ENCODE measurements at regions of chr6 and their contacts with region 1.

Region 1: GRCh38 chr6:125314019-125314581 is 12.3 kb upstream of the HDDC2 start:
- DNase-seq: peak; percentile 54
- H3K4me3 Mint-ChIP-seq: no peak overlapping the region
- H3K27ac Mint-ChIP-seq: no peak overlapping the region
- H3K4me1 Mint-ChIP-seq: no peaks in the 10 kb centered on the region
- H3K27me3 Mint-ChIP-seq: no peaks in the 10 kb centered on the region

Region 2: DNA sequence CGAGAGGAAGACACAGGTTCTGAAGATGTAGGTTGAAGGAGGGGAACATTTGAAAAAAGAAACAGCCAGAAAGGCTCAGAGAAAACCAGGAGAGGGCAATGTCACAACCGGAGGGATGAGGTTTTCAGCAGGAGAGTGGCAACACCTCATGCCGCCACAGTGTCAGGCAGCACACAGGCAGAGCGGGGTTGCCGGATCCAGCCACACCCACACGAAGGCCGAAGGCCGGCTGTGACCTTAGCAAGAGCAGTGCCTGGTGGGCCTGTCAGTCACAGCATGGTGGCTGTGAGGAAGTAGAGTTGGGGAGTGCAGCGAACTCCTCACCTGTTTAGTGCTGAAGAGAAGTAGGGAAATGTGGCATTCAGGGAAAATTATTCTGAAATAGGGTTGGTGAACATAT is 26.4 kb before region 1 on chr6:
- CTCF ChIA-PET with region 1: no interaction called
- DNase-seq: no peak
- H3K4me3 Mint-ChIP-seq: no peak overlapping the region
- H3K27ac Mint-ChIP-seq: no peak overlapping the region
- H3K4me1 Mint-ChIP-seq: peaks cover 2% of the 10 kb centered on the region
- H3K27me3 Mint-ChIP-seq: no peaks in the 10 kb centered on the region

Region 3: GRCh38 chr6:125421853-125422252 is 107.8 kb after region 1 on chr6:
- CTCF ChIA-PET with region 1: no interaction called
- DNase-seq: no peak
- H3K4me3 Mint-ChIP-seq: no peak overlapping the region
- H3K27ac Mint-ChIP-seq: no peak overlapping the region
- H3K4me1 Mint-ChIP-seq: no peaks in the 10 kb centered on the region
- H3K27me3 Mint-ChIP-seq: no peaks in the 10 kb centered on the region

Region 4: GRCh38 chr6:125753218-125753936 is 439.3 kb after region 1 on chr6:
- CTCF ChIA-PET with region 1: interaction called, 82 read pairs
- DNase-seq: no peak
- H3K4me3 Mint-ChIP-seq: no peak overlapping the region
- H3K27ac Mint-ChIP-seq: no peak overlapping the region
- H3K4me1 Mint-ChIP-seq: peaks cover 18% of the 10 kb centered on the region
- H3K27me3 Mint-ChIP-seq: peaks cover 55% of the 10 kb centered on the region

Region 5: DNA sequence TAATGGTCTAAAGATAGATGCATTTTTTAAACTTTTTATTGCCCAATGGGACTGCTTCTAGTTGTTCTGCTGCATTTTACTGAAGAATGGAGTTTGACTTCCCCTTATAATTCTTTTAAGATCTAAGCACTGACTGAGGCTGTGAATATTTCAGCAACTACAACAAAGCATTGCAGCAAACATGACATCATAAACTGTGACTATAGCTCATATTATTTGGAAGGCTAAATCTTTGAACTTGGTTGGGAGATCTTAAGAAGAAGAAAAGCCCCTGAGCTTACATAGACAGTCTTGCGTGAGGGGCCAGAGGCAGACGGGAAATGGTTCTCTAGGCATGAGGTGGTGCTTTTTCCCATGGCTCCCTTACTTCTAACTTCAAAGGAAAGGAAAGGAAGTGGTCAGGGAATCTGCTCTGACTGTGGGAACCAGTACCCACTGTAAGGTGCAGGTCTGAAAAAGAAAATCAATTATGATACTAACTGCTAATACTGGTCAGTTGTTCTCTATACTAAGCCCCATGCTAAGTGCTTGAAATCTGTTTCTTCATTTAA is 450.1 kb after region 1 on chr6:
- CTCF ChIA-PET with region 1: interaction called, 49 read pairs
- DNase-seq: no peak
- H3K4me3 Mint-ChIP-seq: no peak overlapping the region
- H3K27ac Mint-ChIP-seq: no peak overlapping the region
- H3K4me1 Mint-ChIP-seq: peaks cover 5% of the 10 kb centered on the region
- H3K27me3 Mint-ChIP-seq: peaks cover 34% of the 10 kb centered on the region

Measured in activated naive CD4-positive, alpha-beta T cell treated with anti-CD3 and anti-CD28 coated beads, Interleukin-2, amount 10 ng/mL, durations not matched to agents 7 days and 5 days (primary cell).